Dendritic cell treated with granulocyte-macrophage colony-stimulating factor and Interleukin-4, amounts not matched to agents 40 ng/mL and 50 ng/mL, for 4 days (primary cell): ENCODE measurements at regions of chr7 and their contacts with region 1.

Region 1: DNA sequence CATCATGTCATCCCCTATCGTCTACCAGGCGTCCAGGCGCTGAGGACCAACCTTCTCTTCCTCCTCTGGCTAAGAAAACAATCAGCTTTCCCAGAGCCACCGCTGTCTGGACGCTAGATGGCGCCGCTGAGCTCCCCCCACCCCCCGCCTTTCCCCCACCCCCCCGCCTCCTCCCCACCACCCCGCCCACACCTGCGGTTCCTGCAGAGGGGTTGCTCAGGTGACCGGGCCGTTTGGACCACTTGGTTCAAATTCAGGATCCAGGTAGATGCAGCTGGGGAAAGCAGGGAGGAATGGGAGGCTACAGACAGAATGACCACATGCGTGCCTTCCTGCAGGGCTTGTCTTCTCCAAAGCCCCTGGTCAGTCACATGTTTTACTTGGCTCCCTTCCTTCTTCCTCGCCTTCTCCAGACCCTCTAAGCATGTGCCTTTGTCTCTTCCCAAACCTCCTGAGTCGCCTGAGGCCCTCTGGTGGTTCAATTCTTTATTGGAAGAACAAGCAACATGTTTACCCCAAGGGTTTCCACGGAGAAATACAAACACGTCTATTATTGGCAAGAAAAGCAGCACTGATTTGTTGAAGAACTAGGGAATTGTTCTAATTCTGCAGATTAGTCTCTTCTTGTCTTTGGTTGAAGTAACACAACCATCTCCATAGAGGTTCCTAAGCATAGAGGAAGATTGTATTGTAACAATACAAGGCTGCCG is 24.7 kb downstream of the AOC1 start:
- H3K4me3 Mint-ChIP-seq: peak overlapping the region; percentile 42
- H3K27ac Mint-ChIP-seq: peak overlapping the region; percentile 45
- H3K4me1 Mint-ChIP-seq: peaks cover 11% of the 10 kb centered on the region
- H3K27me3 Mint-ChIP-seq: peaks cover 18% of the 10 kb centered on the region

Region 2: DNA sequence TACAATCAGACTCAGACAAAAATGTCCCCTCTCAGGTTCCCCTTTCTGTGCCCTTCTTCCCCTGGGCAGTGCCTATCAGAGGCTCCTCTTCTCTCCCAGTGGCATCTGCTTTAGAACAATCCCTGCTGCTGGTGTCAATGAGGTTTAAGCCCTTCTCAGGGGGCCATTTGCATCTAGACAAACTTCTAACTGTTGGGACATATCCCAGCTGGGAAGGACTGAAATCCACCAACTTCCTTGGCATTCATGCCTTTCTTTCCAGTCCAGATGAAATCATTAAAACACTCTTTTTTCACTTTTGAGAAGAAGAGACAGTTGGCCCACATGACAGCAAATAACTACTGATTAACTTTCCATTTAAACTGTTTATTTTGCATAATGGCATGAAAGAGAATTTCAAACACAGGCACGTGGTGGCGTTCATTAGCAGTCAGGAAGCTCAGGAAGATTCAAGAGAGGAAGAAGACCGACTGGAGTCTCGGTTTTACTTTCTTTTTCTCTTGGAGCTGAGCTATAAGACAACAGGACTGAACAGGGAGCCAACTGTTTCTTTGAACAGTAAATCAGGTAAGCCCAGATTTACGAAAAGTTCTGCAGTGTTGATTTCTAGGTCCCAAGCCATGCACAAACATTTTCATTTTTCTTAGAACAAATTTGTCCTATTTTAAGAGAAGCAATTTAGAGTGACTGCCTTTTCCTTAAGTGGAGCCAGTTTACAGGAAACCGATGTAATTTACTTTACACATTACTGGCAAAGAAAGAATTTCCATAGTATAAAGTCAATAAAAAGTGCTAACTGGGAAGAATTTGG is 191.5 kb before region 1 on chr7 and contains the start of gene GIMAP2:
- intact Hi-C with region 1: no loop called
- H3K4me3 Mint-ChIP-seq: peak within 1 kb of the TSS; percentile 92
- H3K27ac Mint-ChIP-seq: peak within 1 kb of the TSS; percentile 93
- H3K4me1 Mint-ChIP-seq: peaks cover 60% of the 10 kb centered on the region
- H3K27me3 Mint-ChIP-seq: no peaks in the 10 kb centered on the region

Region 3: DNA sequence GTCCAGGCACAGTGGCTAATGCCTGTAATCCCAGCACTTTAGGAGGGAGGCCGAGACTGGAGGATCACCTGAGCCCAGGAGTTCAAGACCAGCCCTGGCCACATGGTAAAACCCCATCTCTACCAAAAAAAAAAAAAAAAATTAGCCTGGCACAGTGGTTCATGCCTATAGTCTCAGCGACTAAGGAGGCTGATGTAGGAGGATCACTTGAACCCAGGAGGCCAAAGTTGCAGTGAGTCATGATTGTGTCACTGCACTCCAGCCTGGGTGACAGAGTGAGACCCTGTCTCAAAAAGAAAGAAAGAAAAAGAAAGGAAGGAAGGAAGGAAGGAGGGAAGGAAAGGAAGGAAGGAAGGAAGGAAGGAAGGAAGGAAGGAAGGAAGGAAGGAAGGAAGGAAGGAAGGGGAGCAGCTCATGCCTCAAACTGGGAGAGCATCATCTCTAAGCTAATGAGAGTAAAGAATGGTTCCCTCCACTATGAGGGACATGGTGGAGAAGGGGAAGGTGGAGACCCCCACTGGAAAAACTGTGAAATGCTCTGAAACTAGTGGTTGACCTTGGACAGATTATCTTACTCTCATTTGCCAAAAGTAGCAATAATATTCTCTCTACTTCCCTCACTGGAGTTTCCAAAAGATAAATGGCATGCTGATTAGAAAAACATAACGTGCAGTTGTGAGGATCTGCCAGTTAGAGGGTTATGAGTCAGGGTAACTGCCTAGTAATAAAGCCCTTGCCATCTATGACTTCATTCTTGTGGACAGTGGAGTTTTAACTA is 123.0 kb before region 1 on chr7:
- intact Hi-C with region 1: no loop called
- H3K4me3 Mint-ChIP-seq: no peak overlapping the region
- H3K27ac Mint-ChIP-seq: peak overlapping the region; percentile 71
- H3K4me1 Mint-ChIP-seq: peaks cover 28% of the 10 kb centered on the region
- H3K27me3 Mint-ChIP-seq: peaks cover 4% of the 10 kb centered on the region

Region 4: GRCh38 chr7:150799741-150800580 is 77.0 kb before region 1 on chr7 and contains the start of gene TMEM176B:
- intact Hi-C with region 1: loop called (anchors 10 kb)
- H3K4me3 Mint-ChIP-seq: peak within 1 kb of the TSS; percentile 96
- H3K27ac Mint-ChIP-seq: peak within 1 kb of the TSS; percentile 96
- H3K4me1 Mint-ChIP-seq: peaks cover 48% of the 10 kb centered on the region
- H3K27me3 Mint-ChIP-seq: no peaks in the 10 kb centered on the region